Heart left ventricle (tissue), 16 donors: ENCODE measurements at regions of chr1 and their contacts with region 1.

Region 1: DNA sequence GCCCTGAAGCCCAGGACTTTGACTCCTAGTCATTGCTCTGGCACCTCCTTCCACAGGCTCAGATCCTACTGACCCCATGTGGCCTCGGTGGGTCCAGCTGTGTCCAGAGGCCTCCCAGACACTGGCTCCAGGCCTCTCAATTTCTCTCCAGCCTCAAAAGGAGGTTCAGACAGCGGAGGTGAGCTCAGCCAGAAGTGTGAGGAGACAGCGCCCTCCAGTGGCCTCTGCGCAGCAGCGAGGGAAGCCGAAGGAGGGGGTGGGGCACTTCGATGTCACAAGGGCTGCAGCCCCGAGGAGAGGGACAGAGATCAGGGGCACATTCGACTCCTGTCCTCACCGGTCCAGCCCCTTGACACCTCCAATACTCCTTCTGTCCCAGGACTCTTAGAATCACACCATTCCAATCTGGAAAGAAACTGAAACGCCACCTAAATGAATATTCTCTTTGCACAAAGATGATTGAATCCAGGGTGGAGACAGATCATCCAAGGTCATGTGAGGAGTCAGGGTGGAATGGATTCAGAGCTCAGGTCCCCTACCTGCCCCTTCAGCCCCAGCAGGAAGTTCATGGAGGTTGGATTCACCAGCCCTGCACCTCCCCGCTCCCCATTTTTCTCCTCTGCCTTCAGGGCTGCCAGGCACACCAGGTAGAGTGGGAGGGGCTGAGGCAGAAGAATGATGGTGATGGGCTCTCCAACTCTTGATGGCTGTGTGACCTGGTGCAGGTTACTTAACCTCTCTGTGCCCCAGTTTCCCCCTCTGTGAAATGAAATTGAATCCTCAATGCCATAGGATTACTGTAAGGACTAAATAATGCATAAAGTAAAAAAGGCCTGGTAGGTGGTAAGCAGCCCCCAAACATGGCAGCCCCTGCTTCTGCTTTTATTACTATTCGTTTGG is 34.8 kb upstream of the ZBTB40 start:
- DNase-seq: peak; percentile 50 to 83 (median 69)
- ATAC-seq: peak; percentile 21 to 60 (median 59)
- H3K4me3 ChIP-seq: no peak overlapping the region
- H3K27ac ChIP-seq: no peak overlapping the region
- H3K4me1 ChIP-seq: peaks cover 0 to 23% (median 7%) of the 10 kb centered on the region in 12 donors
- H3K27me3 ChIP-seq: peaks cover 0 to 30% (median 0%) of the 10 kb centered on the region in 9 donors
- CTCF ChIP-seq: peak; percentile 68 to 83 (median 74)
- POLR2A ChIP-seq: no peak

Region 2: GRCh38 chr1:21703318-21703963 is 713.4 kb before region 1 on chr1:
- intact Hi-C with region 1: loop called in 1 of 10 experiments (anchors 10 kb)
- DNase-seq: no peak
- ATAC-seq: no peak
- H3K4me3 ChIP-seq: no peak overlapping the region
- H3K27ac ChIP-seq: no peak overlapping the region
- H3K4me1 ChIP-seq: peaks cover 0 to 15% (median 7%) of the 10 kb centered on the region in 12 donors
- H3K27me3 ChIP-seq: no peaks in the 10 kb centered on the region
- CTCF ChIP-seq: peak in 9 of 12 donors; percentile 15 to 39 (median 22)
- POLR2A ChIP-seq: no peak

Region 3: DNA sequence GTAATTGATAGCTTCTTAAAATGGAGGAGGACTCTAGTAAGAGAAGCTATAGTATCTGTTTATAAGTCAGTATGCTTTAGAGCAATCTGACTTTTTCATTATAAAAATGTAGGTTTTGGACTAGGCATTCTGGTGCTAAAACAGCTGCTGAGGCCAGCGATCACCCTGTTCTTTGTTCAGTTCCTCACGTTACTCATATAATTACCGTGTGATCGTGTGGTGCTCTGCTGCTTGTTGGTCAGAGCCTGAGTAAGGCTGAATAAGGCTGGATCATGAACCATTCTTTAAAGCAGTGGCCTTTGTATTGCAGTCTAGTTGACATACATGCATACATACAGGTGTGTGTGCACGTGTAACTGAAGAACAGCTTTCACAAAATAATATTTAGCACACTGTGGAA is 339.1 kb before region 1 on chr1:
- intact Hi-C with region 1: no loop called
- DNase-seq: no peak
- ATAC-seq: peak in 3 of 4 donors; percentile 41 to 48 (median 42)
- H3K4me3 ChIP-seq: no peak overlapping the region
- H3K27ac ChIP-seq: peak overlapping the region in 1 of 12 donors; percentile 7
- H3K4me1 ChIP-seq: peaks cover 20 to 85% (median 67%) of the 10 kb centered on the region in 12 donors
- H3K27me3 ChIP-seq: no peaks in the 10 kb centered on the region
- CTCF ChIP-seq: no peak
- POLR2A ChIP-seq: no peak

Region 4: GRCh38 chr1:22114083-22115012 is 302.5 kb before region 1 on chr1:
- intact Hi-C with region 1: loop called (anchors 5 to 10 kb)
- DNase-seq: peak in 2 of 5 donors; percentile 45 to 60
- ATAC-seq: peak in 3 of 4 donors; percentile 33 to 55 (median 41)
- H3K4me3 ChIP-seq: no peak overlapping the region
- H3K27ac ChIP-seq: peak overlapping the region in 2 of 12 donors; percentile 15 to 17
- H3K4me1 ChIP-seq: peaks cover 0 to 66% (median 34%) of the 10 kb centered on the region in 12 donors
- H3K27me3 ChIP-seq: no peaks in the 10 kb centered on the region
- CTCF ChIP-seq: no peak
- POLR2A ChIP-seq: no peak

Region 5: GRCh38 chr1:22490309-22490708 is 73.5 kb after region 1 on chr1:
- intact Hi-C with region 1: loop called in 1 of 10 experiments (anchors 5 kb)
- DNase-seq: no peak
- ATAC-seq: no peak
- H3K4me3 ChIP-seq: no peak overlapping the region
- H3K27ac ChIP-seq: no peak overlapping the region
- H3K4me1 ChIP-seq: peaks cover 0 to 52% (median 24%) of the 10 kb centered on the region in 12 donors
- H3K27me3 ChIP-seq: no peaks in the 10 kb centered on the region
- CTCF ChIP-seq: no peak
- POLR2A ChIP-seq: no peak

Region 6: DNA sequence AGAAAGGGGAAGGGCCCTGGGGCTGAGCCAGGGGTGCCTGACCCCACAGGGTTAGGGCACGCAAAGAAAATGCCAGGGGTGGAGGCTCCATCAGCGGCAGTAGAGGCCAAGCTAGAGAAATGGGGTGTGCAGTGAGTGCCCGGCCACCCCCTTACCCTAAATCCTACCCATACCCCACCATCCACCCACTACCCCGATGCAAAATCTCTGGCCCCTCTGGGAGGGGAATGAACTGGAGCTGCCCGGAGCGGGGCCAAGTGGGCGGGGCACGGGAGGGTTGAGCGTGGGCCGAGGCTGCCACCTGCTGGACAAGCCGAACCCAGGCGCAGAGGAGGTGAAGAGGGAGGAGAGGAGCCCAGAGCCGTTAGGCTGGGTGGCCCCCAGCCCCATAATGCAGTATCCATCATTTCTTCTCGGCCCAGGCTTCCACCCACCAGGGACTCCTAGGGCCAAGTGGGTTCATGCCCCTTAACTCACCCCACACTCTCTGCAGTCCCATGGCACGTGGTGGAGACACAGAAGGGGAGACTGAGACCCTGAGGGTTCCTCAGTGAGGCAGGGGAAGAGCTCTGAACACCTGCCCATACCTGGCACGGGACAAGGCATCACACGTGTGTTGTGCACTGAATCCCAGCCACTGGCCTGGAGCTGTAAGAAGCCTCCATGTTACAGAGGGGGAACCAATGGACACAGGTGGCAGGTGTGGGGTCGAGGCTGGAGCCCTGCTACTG is 225.3 kb after region 1 on chr1:
- intact Hi-C with region 1: loop called (anchors 1 to 2 kb)
- DNase-seq: peak; percentile 77 to 93 (median 85)
- ATAC-seq: peak; percentile 59 to 88 (median 81)
- H3K4me3 ChIP-seq: no peak overlapping the region
- H3K27ac ChIP-seq: peak overlapping the region in 2 of 12 donors; percentile 9 to 75
- H3K4me1 ChIP-seq: peaks cover 0 to 20% (median 0%) of the 10 kb centered on the region in 12 donors
- H3K27me3 ChIP-seq: peaks cover 0 to 26% (median 0%) of the 10 kb centered on the region in 9 donors
- CTCF ChIP-seq: peak; percentile 79 to 96 (median 90)
- POLR2A ChIP-seq: no peak

Region 7: GRCh38 chr1:22870201-22870871 is 453.5 kb after region 1 on chr1:
- intact Hi-C with region 1: no loop called
- DNase-seq: peak; percentile 16 to 73 (median 56)
- ATAC-seq: peak; percentile 42 to 80 (median 69)
- H3K4me3 ChIP-seq: no peak overlapping the region
- H3K27ac ChIP-seq: no peak overlapping the region
- H3K4me1 ChIP-seq: peaks cover 0 to 10% (median 1%) of the 10 kb centered on the region in 12 donors
- H3K27me3 ChIP-seq: peaks cover 0 to 6% (median 0%) of the 10 kb centered on the region in 9 donors
- CTCF ChIP-seq: no peak
- POLR2A ChIP-seq: no peak